A549 (cell line): ENCODE measurements at regions of chr3 and their contacts with region 1.

Region 1: GRCh38 chr3:111717601-111718000 is 122.5 kb upstream of the ZBED2 start:
- DNase-seq: peak; percentile 76 to 88
- ATAC-seq: peak; percentile 92 to 96
- H3K4me3 ChIP-seq: no peak overlapping the region
- H3K27ac ChIP-seq: peak overlapping the region; percentile 65 to 83
- H3K4me1 ChIP-seq: peaks cover 7% of the 10 kb centered on the region
- CTCF ChIP-seq: peak; percentile 96
- EP300 ChIP-seq: no peak
- POLR2A ChIP-seq: no peak
- RAD21 ChIP-seq: peak; percentile 99

Region 2: GRCh38 chr3:111465081-111465670 is 252.4 kb before region 1 on chr3:
- CTCF ChIA-PET with region 1: no interaction called
- POLR2A ChIA-PET with region 1: no interaction called
- DNase-seq: no peak
- ATAC-seq: no peak
- H3K4me3 ChIP-seq: no peak overlapping the region
- H3K27ac ChIP-seq: no peak overlapping the region
- H3K4me1 ChIP-seq: no peaks in the 10 kb centered on the region
- CTCF ChIP-seq: no peak
- EP300 ChIP-seq: no peak
- POLR2A ChIP-seq: no peak
- RAD21 ChIP-seq: no peak

Region 3: DNA sequence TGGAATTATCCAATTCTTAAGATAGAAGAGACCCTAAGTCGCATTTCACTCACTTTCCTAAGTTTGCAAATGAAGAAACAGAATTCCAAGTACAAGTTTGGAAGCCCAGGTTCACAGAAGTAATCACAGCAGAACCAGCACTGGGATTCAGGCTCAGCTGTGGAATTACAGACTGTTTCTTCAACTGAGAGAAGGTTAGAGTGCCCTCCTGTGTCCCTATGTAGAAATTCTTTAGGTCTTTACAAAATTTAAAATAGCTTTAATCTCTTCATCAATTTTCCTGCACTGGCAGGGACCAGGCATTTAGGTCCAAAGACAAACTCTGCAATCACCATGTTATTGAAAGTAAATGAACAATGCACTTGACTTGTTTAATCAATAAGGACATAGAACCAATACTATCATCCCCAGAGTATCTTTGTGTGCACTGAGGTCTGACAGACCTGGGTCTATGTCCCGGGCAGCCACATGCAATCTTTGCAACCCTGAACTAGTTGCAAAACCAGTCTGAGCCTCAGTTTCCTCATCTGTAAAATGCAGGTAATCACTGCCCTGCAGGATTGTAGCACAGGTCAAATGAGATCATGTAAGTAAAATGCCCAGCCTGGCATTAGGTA is 26.2 kb before region 1 on chr3:
- CTCF ChIA-PET with region 1: interaction called, 69 read pairs
- POLR2A ChIA-PET with region 1: no interaction called
- DNase-seq: peak; percentile 40 to 59
- ATAC-seq: peak; percentile 79 to 84; a peak in 5 of 6 replicates
- H3K4me3 ChIP-seq: no peak overlapping the region
- H3K27ac ChIP-seq: peak overlapping the region in 1 of 2 experiments; percentile 57; a peak in 1 of 6 replicates
- H3K4me1 ChIP-seq: peaks cover 68% of the 10 kb centered on the region
- CTCF ChIP-seq: peak; percentile 83
- EP300 ChIP-seq: no peak
- POLR2A ChIP-seq: no peak
- RAD21 ChIP-seq: peak; percentile 76 to 82

Region 4: DNA sequence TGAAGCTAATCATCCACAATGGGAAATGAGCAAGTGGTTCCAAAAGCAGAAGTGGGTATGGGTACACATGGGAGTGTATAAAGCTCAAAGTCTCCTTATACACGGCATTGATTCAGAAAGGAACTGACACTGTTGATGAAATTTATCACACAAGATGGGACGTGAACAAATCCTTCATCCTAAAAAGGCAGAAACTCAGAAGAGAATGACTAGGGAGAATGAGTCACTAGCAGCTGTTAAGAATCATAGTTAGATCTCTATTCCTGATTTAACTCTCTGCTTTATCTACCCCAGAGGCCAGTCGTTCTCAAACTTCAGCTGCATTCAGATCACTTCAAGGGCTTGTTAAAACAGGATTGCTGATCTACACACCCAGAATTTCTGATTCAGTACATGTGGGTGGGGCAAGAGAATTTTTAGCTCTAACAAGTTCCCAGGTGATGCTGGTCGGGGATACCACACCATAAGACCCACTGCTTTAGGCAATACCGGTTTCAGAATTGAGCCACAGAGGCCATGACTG is 43.8 kb after region 1 on chr3:
- CTCF ChIA-PET with region 1: interaction called, 13 read pairs
- POLR2A ChIA-PET with region 1: no interaction called
- DNase-seq: peak in 1 of 2 experiments; percentile 39
- ATAC-seq: peak; percentile 35; a peak in 3 of 6 replicates
- H3K4me3 ChIP-seq: no peak overlapping the region
- H3K27ac ChIP-seq: peak overlapping the region; percentile 64 to 85
- H3K4me1 ChIP-seq: peaks cover 75% of the 10 kb centered on the region
- CTCF ChIP-seq: no peak
- EP300 ChIP-seq: no peak
- POLR2A ChIP-seq: no peak
- RAD21 ChIP-seq: no peak

Region 5: GRCh38 chr3:111810909-111811308 is 93.3 kb after region 1 on chr3:
- CTCF ChIA-PET with region 1: interaction called, 11 read pairs
- POLR2A ChIA-PET with region 1: no interaction called
- DNase-seq: peak in 1 of 2 experiments; percentile 75
- ATAC-seq: peak; percentile 60 to 82; a peak in 4 of 6 replicates
- H3K4me3 ChIP-seq: no peak overlapping the region
- H3K27ac ChIP-seq: peak overlapping the region; percentile 72 to 84
- H3K4me1 ChIP-seq: peaks cover 65% of the 10 kb centered on the region
- CTCF ChIP-seq: no peak
- EP300 ChIP-seq: no peak
- POLR2A ChIP-seq: no peak
- RAD21 ChIP-seq: no peak

Region 6: GRCh38 chr3:111895079-111895478 is 177.5 kb after region 1 on chr3:
- CTCF ChIA-PET with region 1: interaction called, 33 read pairs
- POLR2A ChIA-PET with region 1: interaction called, 3 read pairs
- DNase-seq: peak; percentile 47 to 65
- ATAC-seq: peak; percentile 87 to 92
- H3K4me3 ChIP-seq: no peak overlapping the region
- H3K27ac ChIP-seq: peak overlapping the region in 1 of 2 experiments; percentile 72; a peak in 2 of 6 replicates
- H3K4me1 ChIP-seq: peaks cover 24% of the 10 kb centered on the region
- CTCF ChIP-seq: peak; percentile 67
- EP300 ChIP-seq: no peak
- POLR2A ChIP-seq: no peak
- RAD21 ChIP-seq: peak; percentile 75 to 77

Region 7: DNA sequence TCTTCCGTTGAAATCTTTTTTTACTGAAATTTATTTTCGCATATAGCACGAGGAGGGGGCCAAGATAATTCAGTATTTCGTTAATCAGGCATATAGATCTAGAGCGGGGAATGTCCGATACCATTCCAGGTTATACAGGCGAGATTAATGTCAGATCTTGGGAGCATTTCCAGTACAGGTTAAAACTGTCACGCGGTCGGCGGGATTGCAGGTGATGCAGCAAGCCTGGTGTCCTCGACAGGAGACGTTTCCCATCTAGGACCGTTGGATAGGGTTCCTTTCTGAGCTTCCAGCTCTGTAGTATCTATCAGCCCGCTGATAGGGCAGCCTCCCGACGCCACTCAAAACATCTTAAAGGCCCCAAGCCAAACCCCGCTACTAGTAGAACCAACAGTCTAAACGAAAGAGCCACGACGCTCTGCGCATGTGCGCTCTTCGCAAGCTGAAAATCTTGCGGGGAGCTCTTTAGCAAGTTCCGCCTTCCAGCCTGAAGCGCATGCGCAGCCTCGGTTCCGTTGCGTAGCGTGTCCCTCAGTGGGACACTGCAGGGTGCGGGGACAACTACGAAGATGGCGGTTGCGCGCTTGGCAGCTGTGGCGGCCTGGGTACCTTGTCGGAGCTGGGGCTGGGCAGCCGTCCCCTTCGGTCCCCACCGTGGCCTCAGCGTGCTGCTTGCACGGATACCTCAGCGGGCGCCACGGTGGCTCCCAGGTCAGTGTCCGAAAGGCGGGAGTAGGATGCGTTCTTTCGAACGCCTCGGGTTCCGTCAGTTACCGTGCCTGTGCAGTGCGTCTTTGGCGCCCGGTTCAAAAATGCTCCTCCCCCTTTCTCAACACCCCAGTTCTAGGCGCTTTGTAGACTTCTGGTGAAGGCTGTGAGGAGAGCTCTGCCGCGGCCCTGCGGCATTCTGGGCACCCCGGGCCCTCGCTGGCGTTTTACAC is 261.2 kb after region 1 on chr3 and contains the start of gene ABHD10:
- CTCF ChIA-PET with region 1: interaction called, 312 read pairs
- POLR2A ChIA-PET with region 1: interaction called, 3 read pairs
- DNase-seq: peak; percentile 87 to 99
- ATAC-seq: peak; percentile 96 to 98
- H3K4me3 ChIP-seq: peak within 1 kb of the TSS; percentile 62
- H3K27ac ChIP-seq: peak within 1 kb of the TSS; percentile 84 to 94
- H3K4me1 ChIP-seq: peaks cover 32% of the 10 kb centered on the region
- CTCF ChIP-seq: no peak
- EP300 ChIP-seq: no peak
- POLR2A ChIP-seq: peak; percentile 97
- RAD21 ChIP-seq: no peak
- polyA plus RNA-seq, gene ABHD10: 39.7 and 42.1 TPM in 2 replicates